Common myeloid progenitor, CD34-positive (primary cell): ENCODE measurements at regions of chr6 and their contacts with region 1.

Region 1: DNA sequence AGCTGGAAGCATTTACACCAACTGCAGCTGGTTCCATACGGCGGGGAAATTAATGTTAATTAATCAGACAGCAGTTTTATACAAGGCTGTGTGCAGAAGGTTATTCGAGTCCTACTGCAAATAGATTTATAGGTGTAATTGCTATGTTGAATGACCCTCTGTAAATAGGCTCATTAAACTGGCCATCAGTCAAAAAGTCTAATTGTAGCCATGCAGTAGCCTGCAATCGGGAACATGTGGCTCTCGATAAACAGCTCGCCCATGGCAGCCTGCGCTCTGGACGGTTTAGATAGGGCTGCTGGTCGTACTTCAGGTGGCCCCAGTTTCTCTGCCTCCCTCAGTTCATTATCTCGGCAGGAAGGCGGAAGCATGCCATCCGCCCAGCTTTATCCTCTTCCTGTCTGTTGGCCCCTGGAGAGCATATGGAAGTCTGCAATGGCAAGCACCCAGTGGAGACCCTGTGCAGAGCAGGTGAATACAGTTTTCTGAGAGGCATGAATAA is 143.2 kb downstream of the MBOAT1 start:
- DNase-seq: peak; percentile 87 to 97 (median 92)
- H3K4me3 ChIP-seq: no peak overlapping the region
- H3K27ac ChIP-seq: no peak overlapping the region
- H3K4me1 ChIP-seq: peaks cover 0 to 3% (median 1%) of the 10 kb centered on the region in 4 experiments
- H3K27me3 ChIP-seq: no peaks in the 10 kb centered on the region

Region 2: DNA sequence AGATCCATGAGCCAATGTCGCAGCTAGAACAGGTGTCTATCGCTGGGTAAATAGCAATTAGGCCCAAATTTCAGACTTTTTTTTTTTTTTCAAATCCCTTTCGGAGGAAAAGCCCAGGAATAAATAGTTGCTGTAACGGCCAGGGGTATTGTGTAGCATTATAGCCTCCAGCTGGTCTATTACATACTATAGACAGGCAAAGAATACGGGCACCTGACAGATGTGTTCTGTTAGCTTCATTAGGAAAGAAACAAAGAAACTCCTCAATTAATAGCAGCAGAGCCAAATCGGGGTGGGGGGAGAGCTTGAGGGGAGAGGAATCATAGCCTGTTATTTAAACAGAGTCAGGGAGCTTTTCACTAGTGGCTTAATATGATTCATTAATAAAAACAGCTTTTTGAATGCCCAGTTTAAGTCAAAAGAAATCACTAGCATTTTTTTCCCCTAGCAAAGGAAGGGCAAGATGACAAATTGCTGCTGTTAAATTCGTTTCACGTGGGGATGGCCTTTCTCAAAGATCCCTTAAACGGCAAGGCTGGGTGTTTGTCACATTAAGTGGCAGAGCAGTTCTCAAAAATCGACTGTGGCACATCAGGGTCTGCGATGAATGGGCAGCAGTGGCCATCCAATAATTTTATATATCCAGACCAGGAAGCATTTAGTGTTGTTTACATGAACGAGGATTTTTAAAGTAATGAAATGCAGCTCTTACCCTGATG is 92.5 kb before region 1 on chr6:
- CTCF ChIA-PET with region 1: no interaction called
- POLR2A ChIA-PET with region 1: no interaction called
- DNase-seq: no peak
- H3K4me3 ChIP-seq: no peak overlapping the region
- H3K27ac ChIP-seq: no peak overlapping the region
- H3K4me1 ChIP-seq: no peaks in the 10 kb centered on the region
- H3K27me3 ChIP-seq: peaks cover 0 to 2% (median 0%) of the 10 kb centered on the region in 5 experiments

Region 3: GRCh38 chr6:20056350-20056992 is 12.6 kb before region 1 on chr6:
- CTCF ChIA-PET with region 1: interaction called, 12 read pairs
- POLR2A ChIA-PET with region 1: no interaction called
- DNase-seq: peak; percentile 52 to 78 (median 73)
- H3K4me3 ChIP-seq: no peak overlapping the region
- H3K27ac ChIP-seq: no peak overlapping the region
- H3K4me1 ChIP-seq: peaks cover 3 to 24% (median 12%) of the 10 kb centered on the region in 4 experiments
- H3K27me3 ChIP-seq: no peaks in the 10 kb centered on the region